ENCODE measurements at regions of chr10 and their contacts with region 1.

Region 1: GRCh38 chr10:74826142-74827044 is at the start of gene KAT6B:
- DNase-seq: peak; percentile 100
- ATAC-seq: peak; percentile 73
- H3K4me3 ChIP-seq: peak within 1 kb of the TSS; percentile 74
- H3K27ac ChIP-seq: peak within 1 kb of the TSS; percentile 79
- H3K4me1 ChIP-seq: peaks cover 53% of the 10 kb centered on the region
- H3K27me3 ChIP-seq: no peaks in the 10 kb centered on the region
- CTCF ChIP-seq: peak; percentile 61
- total RNA-seq, gene KAT6B: 83.0 and 94.5 TPM in 2 replicates

Region 2: DNA sequence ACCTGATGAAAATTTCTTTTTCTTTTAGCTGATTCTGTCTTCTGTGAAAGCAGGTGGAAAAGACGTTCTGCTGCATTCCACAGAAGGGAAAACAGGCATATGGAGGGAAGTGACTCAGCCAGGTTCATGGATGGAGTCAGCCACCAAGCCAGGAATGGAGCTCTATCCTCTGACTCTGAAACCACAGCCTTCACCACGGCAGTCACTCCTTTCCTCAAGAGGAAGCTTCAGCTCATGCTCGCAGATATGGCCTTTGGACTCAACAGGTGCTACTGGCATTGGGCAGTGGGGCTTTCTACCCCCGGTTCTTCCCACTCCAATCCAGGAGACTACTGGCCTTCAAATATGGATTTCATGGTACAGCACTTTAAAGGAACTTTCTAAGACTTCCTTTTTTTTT is 927.0 kb before region 1 on chr10:
- CTCF ChIA-PET with region 1: no interaction called
- POLR2A ChIA-PET with region 1: interaction called, 13 read pairs
- intact Hi-C with region 1: no loop called
- DNase-seq: peak; percentile 100
- ATAC-seq: peak; percentile 93
- H3K4me3 ChIP-seq: peak overlapping the region; percentile 8; the same call in 1 of the 2 replicates
- H3K27ac ChIP-seq: peak overlapping the region; percentile 78
- H3K4me1 ChIP-seq: peaks cover 54% of the 10 kb centered on the region
- H3K27me3 ChIP-seq: no peaks in the 10 kb centered on the region
- CTCF ChIP-seq: no peak

Region 3: DNA sequence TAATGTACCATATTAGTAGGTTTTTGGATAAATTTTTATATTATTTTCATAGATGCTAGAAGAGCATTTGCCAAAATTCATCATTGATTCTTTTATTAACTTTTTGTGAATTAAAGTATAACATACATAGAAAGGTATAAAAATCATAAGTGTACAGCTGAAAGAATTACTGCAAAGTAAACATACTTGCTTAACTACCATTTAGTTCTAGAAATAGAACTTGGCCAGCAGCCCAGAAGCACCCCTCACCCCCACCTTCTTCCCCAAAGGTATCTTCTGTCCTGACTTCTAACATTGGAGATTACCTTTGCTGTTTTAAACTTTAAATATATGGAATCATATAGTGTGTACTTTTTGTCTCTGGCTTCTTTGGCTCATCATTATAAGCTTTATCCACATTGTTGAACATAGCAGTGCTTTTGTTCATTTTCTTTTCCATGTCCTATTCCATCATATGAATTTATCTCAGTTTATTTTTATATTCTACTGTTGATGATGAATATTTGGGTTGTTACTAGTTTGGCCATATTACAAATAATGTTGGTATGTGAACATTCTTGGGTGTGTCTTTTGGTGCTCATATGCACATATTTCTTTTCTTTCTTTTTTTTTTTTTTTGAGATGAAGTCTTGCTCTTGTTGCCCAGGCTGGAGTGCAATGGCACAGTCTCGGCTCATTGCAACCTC is 532.6 kb before region 1 on chr10:
- CTCF ChIA-PET with region 1: interaction called, 5 read pairs
- POLR2A ChIA-PET with region 1: no interaction called
- intact Hi-C with region 1: loop called (anchors 2 kb)
- DNase-seq: peak; percentile 100
- ATAC-seq: peak; percentile 80
- H3K4me3 ChIP-seq: peak overlapping the region; percentile 27
- H3K27ac ChIP-seq: peak overlapping the region; percentile 66
- H3K4me1 ChIP-seq: peaks cover 46% of the 10 kb centered on the region
- H3K27me3 ChIP-seq: no peaks in the 10 kb centered on the region
- CTCF ChIP-seq: no peak

Region 4: DNA sequence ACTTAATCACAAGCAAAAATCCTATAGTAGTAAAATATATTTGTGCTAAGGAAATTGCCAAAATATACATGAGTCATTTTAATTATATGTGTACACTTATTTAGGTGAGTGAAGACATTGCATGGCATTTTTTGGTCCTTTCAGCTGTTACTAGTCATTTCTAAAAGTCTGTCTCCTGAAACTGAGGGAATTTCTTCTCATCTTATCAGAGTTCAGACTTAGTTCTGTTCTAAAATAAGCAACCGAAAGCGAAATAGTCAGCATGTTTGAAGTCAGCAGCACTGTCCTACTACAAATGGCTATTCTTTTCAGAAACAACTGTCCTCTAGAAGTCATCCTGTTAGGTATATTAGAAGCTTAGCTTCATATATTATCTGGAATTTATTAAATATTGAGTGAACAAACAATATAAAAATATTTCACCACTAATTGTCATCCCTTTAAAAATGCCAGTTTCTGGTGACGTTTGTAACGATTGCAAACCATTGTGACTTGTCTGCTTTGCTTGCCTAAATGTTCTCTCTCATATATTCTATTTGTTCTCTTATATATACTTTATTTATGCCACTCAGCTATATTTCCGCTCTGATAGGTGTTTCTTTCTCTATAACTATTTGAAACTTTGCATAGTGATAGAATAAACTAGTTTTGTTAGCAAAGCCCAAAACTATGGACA is 227.4 kb before region 1 on chr10:
- CTCF ChIA-PET with region 1: no interaction called
- POLR2A ChIA-PET with region 1: no interaction called
- intact Hi-C with region 1: loop called (anchors 2 kb)
- DNase-seq: peak; percentile 74
- ATAC-seq: peak; percentile 89
- H3K4me3 ChIP-seq: no peak overlapping the region
- H3K27ac ChIP-seq: no peak overlapping the region
- H3K4me1 ChIP-seq: peaks cover 12% of the 10 kb centered on the region
- H3K27me3 ChIP-seq: no peaks in the 10 kb centered on the region
- CTCF ChIP-seq: no peak

Region 5: GRCh38 chr10:74738985-74739567 is 87.3 kb before region 1 on chr10:
- CTCF ChIA-PET with region 1: interaction called, 4 read pairs
- POLR2A ChIA-PET with region 1: no interaction called
- intact Hi-C with region 1: loop called (anchors 1 kb)
- DNase-seq: peak; percentile 71
- ATAC-seq: peak; percentile 64
- H3K4me3 ChIP-seq: no peak overlapping the region
- H3K27ac ChIP-seq: no peak overlapping the region
- H3K4me1 ChIP-seq: peaks cover 10% of the 10 kb centered on the region
- H3K27me3 ChIP-seq: no peaks in the 10 kb centered on the region
- CTCF ChIP-seq: peak; percentile 85

Region 6: DNA sequence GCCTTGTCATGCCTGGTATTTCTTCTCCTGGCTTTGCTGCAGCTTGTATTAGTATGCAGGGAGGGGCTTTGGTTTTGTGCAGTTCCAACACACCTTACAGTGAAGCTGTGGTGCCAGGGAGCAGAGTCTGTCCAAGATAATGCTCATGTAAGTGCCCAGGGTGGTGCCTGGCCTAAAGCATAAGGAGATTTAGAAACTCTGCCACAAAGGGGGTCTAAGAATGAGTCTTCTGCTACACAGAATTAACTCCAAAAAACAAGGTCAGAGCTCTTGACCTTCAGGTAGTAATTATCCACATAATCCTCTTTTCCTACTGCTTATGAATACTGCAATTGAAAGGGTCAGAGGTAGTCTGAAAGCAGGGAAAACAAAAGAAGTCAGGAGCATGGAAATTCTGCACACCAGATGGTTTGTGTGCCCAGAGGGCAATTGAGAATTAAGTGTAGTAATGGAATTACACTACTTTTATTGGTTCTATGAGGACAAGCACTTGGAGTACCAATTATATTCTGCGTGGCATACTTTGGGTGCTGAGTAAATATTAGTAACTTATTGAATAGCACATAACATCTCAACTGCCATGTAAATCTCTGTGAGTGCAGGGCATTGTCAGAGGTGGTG is 121.5 kb after region 1 on chr10:
- CTCF ChIA-PET with region 1: interaction called, 4 read pairs
- POLR2A ChIA-PET with region 1: no interaction called
- intact Hi-C with region 1: loop called (anchors 1 kb)
- DNase-seq: peak; percentile 99
- ATAC-seq: peak; percentile 87
- H3K4me3 ChIP-seq: no peak overlapping the region; the same call in 1 of the 2 replicates
- H3K27ac ChIP-seq: peak overlapping the region; percentile 54
- H3K4me1 ChIP-seq: peaks cover 43% of the 10 kb centered on the region
- H3K27me3 ChIP-seq: no peaks in the 10 kb centered on the region
- CTCF ChIP-seq: no peak

Region 7: DNA sequence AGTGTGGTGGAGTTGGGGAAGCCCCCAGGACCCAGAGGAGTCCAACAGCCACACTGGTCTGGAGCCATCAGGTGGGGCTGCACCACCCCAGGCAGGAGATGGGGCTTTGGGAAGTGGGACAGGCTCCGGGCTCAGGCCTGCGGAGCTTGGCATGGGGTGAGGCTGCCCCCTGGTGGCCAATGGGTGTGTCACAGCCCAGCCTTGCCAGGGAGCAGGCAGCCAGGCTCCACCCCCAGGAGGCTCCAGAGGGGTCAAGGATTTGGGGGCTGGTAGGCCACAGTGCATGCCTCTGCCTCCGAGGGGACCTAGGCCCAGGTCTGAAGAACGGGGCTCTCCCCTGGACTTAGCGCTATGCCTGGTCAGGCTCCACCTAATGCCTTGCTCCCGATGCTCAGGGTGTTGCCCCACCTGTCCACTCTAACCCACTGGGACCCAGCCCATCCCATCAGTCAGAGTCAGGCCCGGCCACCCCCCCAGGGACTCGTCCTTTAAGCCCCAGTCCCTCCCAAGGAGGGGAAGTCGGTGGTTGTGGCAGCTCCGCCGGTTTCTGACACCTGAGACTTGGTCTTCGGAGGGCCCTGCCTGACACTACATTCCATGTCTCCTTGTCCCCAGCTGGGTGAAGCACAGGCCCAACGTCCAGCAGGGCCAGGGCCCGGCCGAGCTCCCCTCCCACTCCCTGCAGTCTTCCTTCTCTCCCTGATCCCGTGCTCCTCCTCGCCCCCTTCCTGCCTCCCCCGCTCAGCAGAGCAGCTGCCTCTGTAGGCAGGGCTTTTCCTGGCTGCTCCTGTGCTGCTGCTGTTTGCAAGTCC is 273.8 kb after region 1 on chr10:
- CTCF ChIA-PET with region 1: no interaction called
- POLR2A ChIA-PET with region 1: interaction called, 18 read pairs
- intact Hi-C with region 1: no loop called
- DNase-seq: peak; percentile 99
- ATAC-seq: peak; percentile 90
- H3K4me3 ChIP-seq: no peak overlapping the region
- H3K27ac ChIP-seq: no peak overlapping the region
- H3K4me1 ChIP-seq: peaks cover 7% of the 10 kb centered on the region; the same call in 1 of the 2 replicates
- H3K27me3 ChIP-seq: no peaks in the 10 kb centered on the region
- CTCF ChIP-seq: peak; percentile 100

Measured in PC-3 (cell line).